Ascending aorta (tissue), 2 donors: ENCODE measurements at regions of chr3 and their contacts with region 1.

Region 1: DNA sequence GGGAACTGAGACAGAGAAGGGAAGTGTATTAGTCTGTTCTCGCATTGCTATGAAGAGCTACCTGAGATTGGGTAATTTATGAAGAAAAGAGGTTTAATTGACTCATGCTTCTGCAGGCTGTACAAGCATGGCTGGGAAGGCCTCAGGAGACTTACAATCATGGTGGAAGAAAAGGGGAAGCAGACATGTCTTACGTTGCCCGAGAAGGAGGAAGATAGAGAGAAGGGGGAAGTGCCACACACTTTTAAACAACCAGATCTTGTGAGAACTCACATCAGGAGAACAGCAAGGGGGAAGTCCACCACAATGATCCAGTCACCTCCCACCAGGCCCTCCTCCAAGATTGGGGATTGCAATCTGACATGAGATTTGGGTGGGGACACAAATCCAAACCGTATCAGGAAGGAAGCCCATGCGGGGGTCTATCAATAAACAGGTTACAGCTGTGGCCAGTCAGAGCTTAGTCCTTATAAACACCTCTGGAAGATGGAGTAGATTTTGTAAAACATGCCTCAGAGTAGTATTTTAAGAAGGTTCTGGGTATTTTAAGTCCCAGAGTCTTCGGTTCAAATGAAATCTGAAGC is 153.9 kb downstream of the GHSR start:
- DNase-seq: no peak
- H3K4me3 ChIP-seq: no peak overlapping the region
- H3K27ac ChIP-seq: no peak overlapping the region
- H3K4me1 ChIP-seq: peaks cover 0 to 5% of the 10 kb centered on the region in 2 donors
- H3K27me3 ChIP-seq: no peaks in the 10 kb centered on the region
- CTCF ChIP-seq: no peak

Region 2: DNA sequence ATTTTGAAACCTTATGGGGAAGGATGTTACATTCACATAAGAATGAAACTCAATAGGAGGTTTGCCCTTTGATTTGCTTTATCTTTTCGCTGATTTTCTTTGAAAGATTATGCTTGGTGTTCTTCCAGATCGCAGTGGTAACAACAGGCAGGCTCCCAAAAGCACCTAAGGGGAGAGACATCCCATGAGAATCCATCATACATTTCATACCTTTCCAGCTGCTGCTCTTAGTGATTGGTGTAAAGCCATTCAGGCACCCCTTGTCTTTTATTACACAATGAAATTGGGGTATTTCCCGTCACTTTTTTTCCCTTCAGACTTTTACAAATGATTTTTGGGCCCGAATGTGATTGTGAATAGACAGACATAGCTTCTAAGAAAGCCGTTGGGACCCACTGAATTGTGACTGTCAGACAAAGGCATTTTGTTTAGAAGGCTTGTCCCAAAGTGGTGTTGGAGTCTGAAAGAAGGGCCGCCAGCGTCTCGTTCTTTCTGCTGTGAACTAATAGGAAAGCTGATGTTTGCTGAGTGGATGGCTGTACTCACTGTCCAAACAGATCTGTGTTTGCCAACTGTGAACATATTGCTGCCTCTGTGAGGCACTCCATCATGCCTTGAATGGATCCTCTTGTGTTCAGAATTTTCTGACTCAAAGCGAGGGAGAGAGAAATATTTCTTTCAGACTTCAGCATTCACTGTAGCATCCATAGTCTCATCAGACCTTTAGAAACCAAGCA is 90.6 kb before region 1 on chr3:
- intact Hi-C with region 1: no loop called
- DNase-seq: no peak
- H3K4me3 ChIP-seq: no peak overlapping the region
- H3K27ac ChIP-seq: peak overlapping the region; percentile 75 to 88
- H3K4me1 ChIP-seq: peaks cover 12 to 61% of the 10 kb centered on the region in 2 donors
- H3K27me3 ChIP-seq: no peaks in the 10 kb centered on the region
- CTCF ChIP-seq: no peak

Region 3: GRCh38 chr3:172332256-172333041 is 38.1 kb after region 1 on chr3:
- intact Hi-C with region 1: loop called (anchors 5 kb)
- DNase-seq: peak in 1 of 2 donors; percentile 84
- H3K4me3 ChIP-seq: peak overlapping the region; percentile 13 to 24
- H3K27ac ChIP-seq: peak overlapping the region; percentile 50 to 57
- H3K4me1 ChIP-seq: no peaks in the 10 kb centered on the region
- H3K27me3 ChIP-seq: no peaks in the 10 kb centered on the region
- CTCF ChIP-seq: peak; percentile 74 to 89 (median 86)